ENCODE measurements at regions of chr18 and their contacts with region 1.

Region 1: GRCh38 chr18:24726727-24727492 is 266.5 kb downstream of the HRH4 start:
- DNase-seq: peak; percentile 61
- H3K4me3 ChIP-seq: peak overlapping the region in 1 of 2 experiments; percentile 43; a peak in 1 of 4 replicates
- H3K27ac ChIP-seq: no peak overlapping the region
- H3K4me1 ChIP-seq: peaks cover 0 to 3% of the 10 kb centered on the region in 2 experiments; a peak in 2 of 4 replicates
- H3K27me3 ChIP-seq: peaks cover 3% of the 10 kb centered on the region; the same call in 1 of the 2 replicates
- CTCF ChIP-seq: peak; percentile 89
- EP300 ChIP-seq: no peak
- RAD21 ChIP-seq: peak; percentile 93

Region 2: GRCh38 chr18:24126155-24126961 is 600.6 kb before region 1 on chr18:
- CTCF ChIA-PET with region 1: no interaction called
- POLR2A ChIA-PET with region 1: no interaction called
- DNase-seq: no peak
- H3K4me3 ChIP-seq: no peak overlapping the region
- H3K27ac ChIP-seq: no peak overlapping the region
- H3K4me1 ChIP-seq: no peaks in the 10 kb centered on the region
- H3K27me3 ChIP-seq: no peaks in the 10 kb centered on the region
- CTCF ChIP-seq: no peak
- EP300 ChIP-seq: no peak
- RAD21 ChIP-seq: no peak

Region 3: DNA sequence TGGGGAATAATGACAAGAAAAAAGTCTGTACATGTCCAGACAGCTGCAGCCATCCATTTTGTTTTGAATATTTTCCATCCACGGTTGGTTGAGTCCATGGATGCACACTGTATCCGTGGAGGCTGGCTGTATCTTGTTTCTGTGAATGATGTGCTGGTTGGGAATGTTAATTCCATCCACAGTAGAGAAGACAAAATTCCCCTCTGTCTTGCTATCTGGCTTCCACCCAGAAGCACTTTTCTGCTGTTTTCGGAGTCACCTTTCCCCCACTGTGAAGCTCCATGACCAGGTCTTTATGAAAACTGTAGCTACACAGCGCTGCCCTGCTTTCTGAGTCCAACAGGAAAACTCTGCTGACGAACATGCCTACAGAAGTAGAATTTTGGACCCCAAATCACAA is 144.1 kb before region 1 on chr18:
- CTCF ChIA-PET with region 1: interaction called, 24 read pairs
- POLR2A ChIA-PET with region 1: no interaction called
- DNase-seq: no peak
- H3K4me3 ChIP-seq: no peak overlapping the region
- H3K27ac ChIP-seq: no peak overlapping the region
- H3K4me1 ChIP-seq: peaks cover 0 to 11% of the 10 kb centered on the region in 2 experiments; a peak in 1 of 4 replicates
- H3K27me3 ChIP-seq: no peaks in the 10 kb centered on the region
- CTCF ChIP-seq: no peak
- EP300 ChIP-seq: no peak
- RAD21 ChIP-seq: no peak

Region 4: DNA sequence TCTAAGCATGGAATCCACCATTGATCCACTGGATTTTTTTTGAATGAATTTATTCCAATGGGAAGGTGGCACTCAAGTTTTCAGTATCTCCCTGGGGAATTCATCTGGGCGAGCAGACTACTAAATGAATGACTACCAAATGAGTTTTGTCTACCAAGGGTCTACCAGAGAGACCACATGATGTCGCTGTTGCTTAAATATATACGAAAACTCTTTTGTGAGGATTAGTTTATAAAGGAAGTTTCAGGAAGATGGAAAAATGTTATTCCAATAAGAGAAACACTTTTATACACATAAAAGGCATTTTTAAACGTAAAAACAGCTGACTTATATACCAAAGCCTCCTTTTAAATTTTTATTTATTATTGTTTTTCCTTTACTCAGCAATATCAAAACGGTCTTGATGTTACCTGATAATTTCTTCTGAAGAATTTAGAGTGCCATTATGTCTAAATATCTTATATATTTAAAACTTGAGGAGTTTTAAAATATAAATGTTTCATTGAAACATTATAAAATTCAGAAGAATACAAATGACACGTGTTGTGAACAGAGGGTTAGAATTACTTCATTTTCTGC is 126.7 kb before region 1 on chr18:
- CTCF ChIA-PET with region 1: interaction called, 151 read pairs
- POLR2A ChIA-PET with region 1: no interaction called
- DNase-seq: peak; percentile 56
- H3K4me3 ChIP-seq: no peak overlapping the region
- H3K27ac ChIP-seq: no peak overlapping the region
- H3K4me1 ChIP-seq: no peaks in the 10 kb centered on the region
- H3K27me3 ChIP-seq: no peaks in the 10 kb centered on the region
- CTCF ChIP-seq: peak; percentile 75
- EP300 ChIP-seq: no peak
- RAD21 ChIP-seq: peak; percentile 84

Region 5: GRCh38 chr18:24611075-24611474 is 115.8 kb before region 1 on chr18:
- CTCF ChIA-PET with region 1: interaction called, 24 read pairs
- POLR2A ChIA-PET with region 1: no interaction called
- DNase-seq: no peak
- H3K4me3 ChIP-seq: no peak overlapping the region
- H3K27ac ChIP-seq: no peak overlapping the region
- H3K4me1 ChIP-seq: no peaks in the 10 kb centered on the region
- H3K27me3 ChIP-seq: no peaks in the 10 kb centered on the region
- CTCF ChIP-seq: no peak
- EP300 ChIP-seq: no peak
- RAD21 ChIP-seq: no peak

Region 6: DNA sequence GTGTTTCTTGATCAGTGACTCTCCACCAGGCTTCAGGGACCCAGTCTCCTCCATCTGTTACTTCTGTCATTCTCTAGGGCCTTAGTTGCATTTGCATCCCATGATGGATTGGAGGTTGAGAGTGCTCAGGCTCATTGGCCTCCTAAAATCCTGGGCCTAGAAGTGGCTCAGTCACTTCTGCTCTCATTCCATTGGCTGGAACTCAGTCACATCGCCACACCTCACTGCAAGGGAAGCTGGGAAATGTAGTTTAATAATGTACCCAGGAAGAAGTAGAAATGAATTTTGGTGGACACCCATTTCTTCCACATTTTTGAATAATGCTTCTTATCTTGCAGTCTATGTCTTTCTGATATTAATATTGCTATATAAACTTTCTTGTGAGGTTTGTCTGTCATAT is 42.9 kb before region 1 on chr18:
- CTCF ChIA-PET with region 1: interaction called, 13 read pairs
- POLR2A ChIA-PET with region 1: no interaction called
- DNase-seq: no peak
- H3K4me3 ChIP-seq: no peak overlapping the region
- H3K27ac ChIP-seq: no peak overlapping the region
- H3K4me1 ChIP-seq: peaks cover 0 to 4% of the 10 kb centered on the region in 2 experiments; a peak in 1 of 4 replicates
- H3K27me3 ChIP-seq: no peaks in the 10 kb centered on the region
- CTCF ChIP-seq: no peak
- EP300 ChIP-seq: no peak
- RAD21 ChIP-seq: no peak

Measured in SK-N-SH (cell line).